Natural killer cell (primary cell): ENCODE measurements at regions of chr4 and their contacts with region 1.

Region 1: DNA sequence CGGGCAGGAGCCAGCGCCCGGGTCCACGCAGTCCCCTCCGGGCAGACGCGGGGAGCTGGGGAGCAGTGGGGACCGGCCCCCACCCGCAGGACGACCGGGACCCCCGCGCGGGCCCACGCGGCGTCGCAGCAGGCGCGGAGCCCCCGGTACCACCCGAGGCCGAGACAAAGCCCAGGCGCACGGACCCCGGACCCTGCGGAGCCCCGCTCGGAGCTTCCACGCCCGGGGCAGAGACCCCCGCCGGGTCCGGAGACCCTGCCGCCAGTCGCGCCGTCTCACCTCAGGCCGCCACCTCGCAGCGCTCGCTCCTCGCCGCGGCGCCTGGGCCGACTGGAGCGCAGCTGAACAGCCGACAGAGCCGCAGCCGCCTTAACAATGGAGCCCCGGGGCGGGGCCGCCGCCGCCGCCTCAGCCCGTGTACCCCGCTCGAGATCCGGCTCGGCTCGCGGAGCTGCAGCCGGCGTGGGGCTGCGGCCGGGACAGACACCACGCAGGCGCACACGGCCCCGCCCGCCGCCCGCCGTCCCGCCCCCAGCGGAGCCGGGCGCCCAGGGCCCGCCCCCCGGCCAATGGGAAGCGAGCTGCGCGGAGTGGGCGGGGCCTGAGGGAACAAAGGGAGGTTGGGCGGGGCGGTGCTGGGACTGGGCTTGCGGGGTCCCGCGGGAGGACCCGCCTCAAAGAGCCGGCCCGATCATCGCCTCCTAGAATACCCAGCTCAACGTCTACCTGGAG is at the start of gene AFAP1:
- DNase-seq: peak; percentile 85 to 94
- ATAC-seq: peak; percentile 93 to 96 (median 94)
- H3K4me3 ChIP-seq: peak within 1 kb of the TSS; percentile 38
- H3K4me3 Mint-ChIP-seq: peak within 1 kb of the TSS; percentile 84
- H3K27ac ChIP-seq: no peak within 1 kb of the TSS
- H3K27ac Mint-ChIP-seq: peak within 1 kb of the TSS in 1 of 2 donors; percentile 30
- H3K4me1 ChIP-seq: peaks cover 16% of the 10 kb centered on the region
- H3K4me1 Mint-ChIP-seq: peaks cover 9 to 11% of the 10 kb centered on the region in 2 donors
- H3K27me3 ChIP-seq: peaks cover 6% of the 10 kb centered on the region
- H3K27me3 Mint-ChIP-seq: peaks cover 9% of the 10 kb centered on the region in 2 donors
- CTCF ChIP-seq: no peak
- total RNA-seq, gene AFAP1: 4.9 to 12.5 (median 9.5) TPM

Region 2: GRCh38 chr4:7949759-7950158 is 10.2 kb after region 1 on chr4:
- intact Hi-C with region 1: no loop called
- DNase-seq: no peak
- ATAC-seq: no peak
- H3K4me3 ChIP-seq: no peak overlapping the region
- H3K4me3 Mint-ChIP-seq: no peak overlapping the region
- H3K27ac ChIP-seq: no peak overlapping the region
- H3K27ac Mint-ChIP-seq: no peak overlapping the region
- H3K4me1 ChIP-seq: no peaks in the 10 kb centered on the region
- H3K4me1 Mint-ChIP-seq: peaks cover 0 to 11% of the 10 kb centered on the region in 2 donors
- H3K27me3 ChIP-seq: no peaks in the 10 kb centered on the region
- H3K27me3 Mint-ChIP-seq: peaks cover 10 to 11% of the 10 kb centered on the region in 2 donors
- CTCF ChIP-seq: no peak

Region 3: DNA sequence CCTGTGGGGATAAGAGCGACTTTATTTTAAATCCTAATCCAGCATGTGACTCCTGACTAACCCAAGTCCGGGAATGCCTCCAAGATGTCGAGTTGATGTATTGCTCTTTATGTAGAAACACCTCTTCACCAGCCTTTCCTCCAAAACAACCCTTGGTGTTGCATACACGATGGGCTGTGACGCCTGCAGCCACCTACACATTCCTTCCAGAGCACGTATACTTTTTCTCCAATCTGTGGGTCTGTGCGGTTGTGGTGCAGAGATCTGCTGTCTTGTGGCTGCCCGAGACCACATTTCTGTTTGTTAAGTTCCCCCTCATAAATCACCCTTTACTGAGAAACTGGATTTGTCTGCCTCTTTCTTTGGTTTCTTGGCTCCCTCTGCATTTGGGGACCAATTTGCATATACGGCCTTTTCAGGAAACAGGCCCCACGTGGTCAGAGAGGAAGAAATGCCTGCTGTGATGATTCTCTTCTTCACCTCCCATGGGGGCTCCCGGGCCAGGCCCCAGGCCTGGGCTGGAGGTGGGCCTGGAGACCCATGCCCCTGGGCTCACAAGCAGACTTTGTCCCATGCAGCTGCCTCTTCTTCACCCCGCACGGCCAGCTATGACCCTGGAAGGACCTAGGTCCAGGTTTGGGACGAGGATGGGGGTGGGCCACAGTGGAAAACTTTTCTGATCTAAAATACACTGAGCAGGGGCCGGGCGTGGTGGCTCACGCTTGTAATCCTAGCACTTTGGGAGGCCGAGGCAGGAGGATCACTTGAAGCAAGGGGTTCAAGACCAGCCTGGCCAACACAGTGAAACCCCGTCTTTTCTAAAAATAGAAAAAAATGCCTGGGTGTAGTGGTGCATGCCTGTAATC is 21.5 kb after region 1 on chr4:
- intact Hi-C with region 1: loop called (anchors 2 kb)
- DNase-seq: peak in 1 of 2 donors; percentile 63
- ATAC-seq: peak in 1 of 3 donors; percentile 25
- H3K4me3 ChIP-seq: no peak overlapping the region
- H3K4me3 Mint-ChIP-seq: peak overlapping the region; percentile 66
- H3K27ac ChIP-seq: no peak overlapping the region
- H3K27ac Mint-ChIP-seq: peak overlapping the region in 1 of 2 donors; percentile 75
- H3K4me1 ChIP-seq: peaks cover 36% of the 10 kb centered on the region
- H3K4me1 Mint-ChIP-seq: peaks cover 28 to 45% of the 10 kb centered on the region in 2 donors
- H3K27me3 ChIP-seq: no peaks in the 10 kb centered on the region
- H3K27me3 Mint-ChIP-seq: peaks cover 6 to 19% of the 10 kb centered on the region in 2 donors
- CTCF ChIP-seq: no peak

Region 4: GRCh38 chr4:7973545-7973981 is 34.0 kb after region 1 on chr4:
- intact Hi-C with region 1: loop called (anchors 5 kb)
- DNase-seq: peak in 1 of 2 donors; percentile 36
- ATAC-seq: peak; percentile 2 to 28 (median 26)
- H3K4me3 ChIP-seq: no peak overlapping the region
- H3K4me3 Mint-ChIP-seq: peak overlapping the region; percentile 84
- H3K27ac ChIP-seq: peak overlapping the region; percentile 96
- H3K27ac Mint-ChIP-seq: peak overlapping the region; percentile 99 to 100
- H3K4me1 ChIP-seq: peaks cover 56% of the 10 kb centered on the region
- H3K4me1 Mint-ChIP-seq: peaks cover 59 to 83% of the 10 kb centered on the region in 2 donors
- H3K27me3 ChIP-seq: no peaks in the 10 kb centered on the region
- H3K27me3 Mint-ChIP-seq: no peaks in the 10 kb centered on the region
- CTCF ChIP-seq: no peak

Region 5: GRCh38 chr4:7987148-7987989 is 47.8 kb after region 1 on chr4:
- intact Hi-C with region 1: loop called (anchors 5 kb)
- DNase-seq: peak; percentile 74 to 89
- ATAC-seq: peak; percentile 72 to 94 (median 89)
- H3K4me3 ChIP-seq: no peak overlapping the region
- H3K4me3 Mint-ChIP-seq: no peak overlapping the region
- H3K27ac ChIP-seq: no peak overlapping the region
- H3K27ac Mint-ChIP-seq: no peak overlapping the region
- H3K4me1 ChIP-seq: peaks cover 12% of the 10 kb centered on the region
- H3K4me1 Mint-ChIP-seq: peaks cover 6 to 15% of the 10 kb centered on the region in 2 donors
- H3K27me3 ChIP-seq: no peaks in the 10 kb centered on the region
- H3K27me3 Mint-ChIP-seq: peaks cover 6 to 7% of the 10 kb centered on the region in 2 donors
- CTCF ChIP-seq: peak; percentile 88